CD4-positive, alpha-beta memory T cell (primary cell): ENCODE measurements at regions of chr6 and their contacts with region 1.

Region 1: DNA sequence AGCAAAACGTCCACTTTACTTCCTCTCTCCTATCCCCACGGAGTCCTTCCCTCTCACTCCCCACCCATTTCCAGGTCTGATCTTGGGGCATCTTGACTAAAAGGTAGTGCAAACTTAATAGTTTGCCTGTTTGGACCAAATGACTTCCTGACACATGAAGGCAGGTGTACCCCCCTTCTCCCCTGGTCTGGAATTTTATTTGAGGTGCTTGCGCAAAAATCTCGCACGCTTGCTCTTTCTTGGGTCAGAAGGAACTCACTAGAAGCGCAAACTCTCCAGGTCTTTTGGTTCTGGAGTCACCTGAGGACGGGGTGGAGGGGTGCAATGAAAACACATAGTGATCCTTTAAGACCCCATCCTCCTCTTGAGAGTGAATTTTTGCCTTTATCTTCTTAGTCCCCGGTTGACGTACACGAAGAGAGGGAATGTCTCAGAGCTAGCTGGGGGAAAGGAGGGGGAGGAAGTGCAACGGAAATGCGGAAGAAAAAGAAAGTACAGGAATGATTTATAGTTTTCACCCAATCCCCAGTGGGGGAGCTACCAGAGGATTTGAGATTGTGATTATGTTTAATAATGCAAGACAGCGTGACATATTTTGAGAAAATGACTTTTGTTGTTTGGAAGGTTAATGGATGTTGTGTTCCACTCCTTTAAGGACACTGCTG is 4.9 kb downstream of the ADGRB3 start:
- DNase-seq: no peak
- H3K4me3 ChIP-seq: no peak overlapping the region
- H3K4me3 Mint-ChIP-seq: peak overlapping the region in 1 of 8 donors; percentile 19
- H3K27ac ChIP-seq: no peak overlapping the region
- H3K27ac Mint-ChIP-seq: peak overlapping the region in 1 of 7 donors; percentile 36
- H3K4me1 ChIP-seq: peaks cover 10% of the 10 kb centered on the region
- H3K4me1 Mint-ChIP-seq: peaks cover 8 to 16% (median 10%) of the 10 kb centered on the region in 4 donors
- H3K27me3 ChIP-seq: peaks cover 7% of the 10 kb centered on the region
- H3K27me3 Mint-ChIP-seq: peaks cover 17 to 27% of the 10 kb centered on the region in 2 donors

Region 2: GRCh38 chr6:68967549-68968300 is 327.8 kb after region 1 on chr6:
- CTCF ChIA-PET with region 1: no interaction called
- POLR2A ChIA-PET with region 1: no interaction called
- intact Hi-C with region 1: loop called (anchors 5 kb)
- DNase-seq: peak; percentile 36 to 48 (median 45)
- H3K4me3 ChIP-seq: no peak overlapping the region
- H3K4me3 Mint-ChIP-seq: no peak overlapping the region
- H3K27ac ChIP-seq: no peak overlapping the region
- H3K27ac Mint-ChIP-seq: no peak overlapping the region
- H3K4me1 ChIP-seq: no peaks in the 10 kb centered on the region
- H3K4me1 Mint-ChIP-seq: peaks cover 0 to 11% (median 3%) of the 10 kb centered on the region in 4 donors
- H3K27me3 ChIP-seq: no peaks in the 10 kb centered on the region
- H3K27me3 Mint-ChIP-seq: no peaks in the 10 kb centered on the region